Activated B cell treated with CpG ODN at 0.5 μM for 24 hours (primary cell): ENCODE measurements at regions of chr22 and their contacts with region 1.

Region 1: GRCh38 chr22:45775569-45776312 is 104.1 kb downstream of the ATXN10 start:
- DNase-seq: peak; percentile 23
- ATAC-seq: peak; percentile 87
- H3K4me3 Mint-ChIP-seq: peak overlapping the region; percentile 68
- H3K27ac Mint-ChIP-seq: peak overlapping the region; percentile 82
- H3K4me1 Mint-ChIP-seq: peaks cover 65% of the 10 kb centered on the region
- H3K27me3 Mint-ChIP-seq: no peaks in the 10 kb centered on the region
- CTCF ChIP-seq: no peak

Region 2: GRCh38 chr22:45790401-45790800 is 14.7 kb after region 1 on chr22:
- CTCF ChIA-PET with region 1: no interaction called
- POLR2A ChIA-PET with region 1: no interaction called
- intact Hi-C with region 1: loop called (anchors 2 kb)
- DNase-seq: no peak
- ATAC-seq: no peak
- H3K4me3 Mint-ChIP-seq: no peak overlapping the region
- H3K27ac Mint-ChIP-seq: no peak overlapping the region
- H3K4me1 Mint-ChIP-seq: peaks cover 3% of the 10 kb centered on the region
- H3K27me3 Mint-ChIP-seq: no peaks in the 10 kb centered on the region
- CTCF ChIP-seq: no peak